Endothelial cell of umbilical vein (primary cell): ENCODE measurements at regions of chr16 and their contacts with region 1.

Region 1: DNA sequence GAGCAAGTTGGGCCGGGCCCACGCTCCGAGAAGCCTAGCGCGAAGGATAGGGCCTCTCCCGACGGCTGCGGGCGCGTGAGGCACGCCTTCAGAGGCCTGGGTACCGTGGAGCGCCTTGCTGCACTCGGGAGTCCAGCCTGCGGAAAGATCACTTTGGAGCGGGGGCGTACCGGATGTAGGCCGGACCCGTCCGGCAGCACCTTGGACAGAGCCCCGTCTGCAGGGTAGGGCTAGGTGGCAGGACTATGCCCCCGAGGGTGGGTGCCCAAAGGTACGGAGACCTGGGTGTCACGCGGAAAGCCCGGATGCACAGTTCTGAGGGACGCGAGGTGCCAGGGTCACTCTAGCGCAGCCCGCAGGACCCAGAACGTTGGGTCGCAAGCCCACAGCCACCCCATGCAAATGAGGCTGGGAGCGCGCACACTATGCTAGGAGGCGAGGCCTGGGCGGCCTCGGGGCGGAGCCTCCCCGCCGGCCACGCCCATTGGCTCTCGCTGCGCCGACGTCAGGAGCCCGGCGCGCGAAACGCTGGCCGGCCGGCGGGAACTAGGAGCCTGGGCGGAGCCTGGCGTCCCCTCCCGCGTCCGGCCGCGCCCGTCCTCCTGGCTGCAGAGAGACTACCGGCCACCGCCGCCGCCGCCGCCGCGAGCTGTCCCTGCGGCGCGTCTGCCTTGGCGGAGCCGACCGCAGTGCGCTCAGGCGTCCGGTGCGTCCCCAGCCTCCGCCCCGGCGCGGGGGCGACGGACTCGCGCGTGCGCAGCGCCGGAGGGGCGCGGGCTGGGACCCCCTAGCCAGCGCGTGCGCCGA is at the start of gene PAQR4:
- DNase-seq: peak; percentile 88
- H3K4me3 ChIP-seq: peak within 1 kb of the TSS; percentile 58 to 94 (median 61)
- H3K27ac ChIP-seq: peak within 1 kb of the TSS; percentile 20
- H3K4me1 ChIP-seq: peaks cover 16% of the 10 kb centered on the region
- H3K27me3 ChIP-seq: peaks cover 18 to 39% of the 10 kb centered on the region in 2 experiments
- CTCF ChIP-seq: no peak
- POLR2A ChIP-seq: no peak
- total RNA-seq, gene PAQR4: 25.4 and 31.2 TPM in 2 replicates

Region 2: GRCh38 chr16:2980227-2981086 is 11.5 kb after region 1 on chr16 and contains the start of gene PKMYT1:
- CTCF ChIA-PET with region 1: interaction called, 10 read pairs
- POLR2A ChIA-PET with region 1: interaction called, 3 read pairs
- dilution Hi-C with region 1: no loop called
- intact Hi-C with region 1: loop called (anchors 1 kb)
- DNase-seq: peak; percentile 90
- H3K4me3 ChIP-seq: peak within 1 kb of the TSS; percentile 53 to 74 (median 55)
- H3K27ac ChIP-seq: peak within 1 kb of the TSS; percentile 49
- H3K4me1 ChIP-seq: peaks cover 10% of the 10 kb centered on the region
- H3K27me3 ChIP-seq: no peaks in the 10 kb centered on the region
- CTCF ChIP-seq: no peak
- POLR2A ChIP-seq: peak; percentile 97
- total RNA-seq, gene PKMYT1: 36.1 and 48.5 TPM in 2 replicates